Panc1 (cell line): ENCODE measurements at regions of chr4 and their contacts with region 1.

Region 1: DNA sequence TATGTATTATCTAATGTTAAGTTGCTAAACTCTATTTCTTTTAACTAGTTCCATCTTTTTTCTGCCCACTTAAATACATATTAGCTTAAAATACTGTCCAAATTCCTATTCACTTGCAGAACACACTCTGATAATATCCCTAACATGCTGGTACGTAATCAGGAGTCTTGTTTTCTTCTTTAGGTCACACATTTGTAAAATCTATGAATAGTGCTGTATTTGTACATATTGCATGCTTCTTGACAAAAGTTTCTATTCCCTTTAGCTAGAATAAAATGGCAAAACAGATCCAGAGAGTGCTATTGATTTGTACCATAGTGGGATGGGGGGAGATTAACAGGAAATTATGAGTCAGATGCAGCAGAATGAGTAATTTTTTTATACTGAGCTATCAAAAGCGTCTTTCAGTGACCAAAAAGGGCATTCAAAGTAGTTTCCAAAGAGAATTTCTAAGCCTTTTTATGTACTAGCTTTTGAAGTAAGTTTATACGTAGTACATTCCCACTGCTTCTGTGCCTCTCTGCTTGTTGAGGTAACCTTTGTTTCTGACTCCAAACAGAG is 126.5 kb downstream of the PTPN13 start:
- DNase-seq: no peak
- ATAC-seq: no peak
- H3K4me3 ChIP-seq: no peak overlapping the region
- H3K27ac ChIP-seq: no peak overlapping the region
- H3K4me1 ChIP-seq: no peaks in the 10 kb centered on the region
- H3K27me3 ChIP-seq: no peaks in the 10 kb centered on the region
- CTCF ChIP-seq: no peak

Region 2: GRCh38 chr4:86482311-86483172 is 238.0 kb before region 1 on chr4:
- CTCF ChIA-PET with region 1: no interaction called
- POLR2A ChIA-PET with region 1: no interaction called
- in situ Hi-C with region 1: no loop called
- intact Hi-C with region 1: no loop called
- DNase-seq: no peak
- ATAC-seq: no peak
- H3K4me3 ChIP-seq: no peak overlapping the region
- H3K27ac ChIP-seq: no peak overlapping the region
- H3K4me1 ChIP-seq: no peaks in the 10 kb centered on the region
- H3K27me3 ChIP-seq: no peaks in the 10 kb centered on the region
- CTCF ChIP-seq: no peak

Region 3: GRCh38 chr4:86759298-86759697 is 38.7 kb after region 1 on chr4:
- CTCF ChIA-PET with region 1: no interaction called
- POLR2A ChIA-PET with region 1: interaction called, 19 read pairs
- in situ Hi-C with region 1: no loop called
- intact Hi-C with region 1: no loop called
- DNase-seq: no peak
- ATAC-seq: no peak
- H3K4me3 ChIP-seq: no peak overlapping the region
- H3K27ac ChIP-seq: no peak overlapping the region
- H3K4me1 ChIP-seq: no peaks in the 10 kb centered on the region
- H3K27me3 ChIP-seq: no peaks in the 10 kb centered on the region
- CTCF ChIP-seq: no peak

Region 4: GRCh38 chr4:86855573-86855992 is 135.0 kb after region 1 on chr4:
- CTCF ChIA-PET with region 1: no interaction called
- POLR2A ChIA-PET with region 1: no interaction called
- in situ Hi-C with region 1: no loop called
- intact Hi-C with region 1: no loop called
- DNase-seq: no peak
- ATAC-seq: no peak
- H3K4me3 ChIP-seq: no peak overlapping the region
- H3K27ac ChIP-seq: no peak overlapping the region
- H3K4me1 ChIP-seq: no peaks in the 10 kb centered on the region
- H3K27me3 ChIP-seq: no peaks in the 10 kb centered on the region
- CTCF ChIP-seq: no peak